ENCODE measurements at regions of chr16 and their contacts with region 1.

Region 1: DNA sequence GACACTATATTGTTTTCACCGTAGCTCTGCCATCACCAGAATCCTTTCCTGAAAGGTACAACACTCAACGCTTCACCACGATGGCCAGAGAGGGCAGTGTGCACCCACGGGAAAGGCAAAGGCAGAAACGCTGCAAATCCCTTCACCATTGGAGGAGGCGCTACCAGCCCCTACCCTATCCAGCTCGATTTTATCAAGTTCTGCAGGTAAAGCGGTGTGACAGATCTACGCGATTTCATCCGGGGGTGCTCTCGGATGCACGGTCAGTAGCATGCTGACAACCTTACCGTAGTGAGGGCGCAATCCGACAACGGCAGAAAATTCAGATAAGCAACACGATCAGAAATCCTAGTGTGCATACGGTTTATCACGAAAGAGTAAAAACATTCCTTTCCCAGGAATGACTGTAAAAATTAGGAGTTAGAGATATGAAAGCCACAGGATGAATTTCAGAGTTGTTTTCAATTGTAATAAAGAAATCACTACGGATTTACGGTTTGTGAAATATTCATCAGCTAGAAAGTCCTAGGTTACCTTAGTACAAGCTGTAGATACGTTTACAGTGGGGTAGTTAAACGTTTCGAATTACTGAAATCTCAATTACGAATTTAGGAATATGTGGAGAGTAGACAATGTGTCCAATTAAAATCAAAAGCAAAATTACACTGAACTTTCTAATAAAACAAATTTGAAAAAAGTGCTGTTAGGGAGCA is 1.8 kb downstream of the NETO2 start:
- DNase-seq: peak; percentile 87
- ATAC-seq: peak; percentile 55
- H3K4me3 ChIP-seq: peak overlapping the region; percentile 42 to 81 (median 64)
- H3K4me3 Mint-ChIP-seq: peak overlapping the region; percentile 94
- H3K27ac ChIP-seq: no peak overlapping the region
- H3K27ac Mint-ChIP-seq: peak overlapping the region; percentile 54
- H3K4me1 ChIP-seq: peaks cover 9 to 16% of the 10 kb centered on the region in 2 donors
- H3K4me1 Mint-ChIP-seq: peaks cover 19% of the 10 kb centered on the region
- H3K27me3 ChIP-seq: peaks cover 0 to 9% (median 0%) of the 10 kb centered on the region in 4 experiments
- H3K27me3 Mint-ChIP-seq: no peaks in the 10 kb centered on the region
- CTCF ChIP-seq: peak; percentile 96

Region 2: GRCh38 chr16:46947900-46948547 is 193.9 kb before region 1 on chr16:
- CTCF ChIA-PET with region 1: interaction called, 10 read pairs
- POLR2A ChIA-PET with region 1: no interaction called
- intact Hi-C with region 1: loop called (anchors 1 kb)
- DNase-seq: peak; percentile 68
- ATAC-seq: peak; percentile 63
- H3K4me3 ChIP-seq: no peak overlapping the region
- H3K4me3 Mint-ChIP-seq: no peak overlapping the region
- H3K27ac ChIP-seq: no peak overlapping the region
- H3K27ac Mint-ChIP-seq: no peak overlapping the region
- H3K4me1 ChIP-seq: peaks cover 0 to 3% of the 10 kb centered on the region in 2 donors
- H3K4me1 Mint-ChIP-seq: peaks cover 6% of the 10 kb centered on the region
- H3K27me3 ChIP-seq: no peaks in the 10 kb centered on the region
- H3K27me3 Mint-ChIP-seq: no peaks in the 10 kb centered on the region
- CTCF ChIP-seq: peak; percentile 75

Region 3: GRCh38 chr16:47037746-47038458 is 104.0 kb before region 1 on chr16:
- CTCF ChIA-PET with region 1: interaction called, 50 read pairs
- POLR2A ChIA-PET with region 1: no interaction called
- intact Hi-C with region 1: loop called (anchors 1 kb)
- DNase-seq: peak; percentile 90
- ATAC-seq: peak; percentile 98
- H3K4me3 ChIP-seq: peak overlapping the region; percentile 53 to 90 (median 63)
- H3K4me3 Mint-ChIP-seq: peak overlapping the region; percentile 90
- H3K27ac ChIP-seq: peak overlapping the region in 1 of 2 donors; percentile 52
- H3K27ac Mint-ChIP-seq: peak overlapping the region; percentile 68
- H3K4me1 ChIP-seq: peaks cover 3 to 26% of the 10 kb centered on the region in 2 donors
- H3K4me1 Mint-ChIP-seq: peaks cover 25% of the 10 kb centered on the region
- H3K27me3 ChIP-seq: no peaks in the 10 kb centered on the region
- H3K27me3 Mint-ChIP-seq: no peaks in the 10 kb centered on the region
- CTCF ChIP-seq: peak; percentile 95

Region 4: DNA sequence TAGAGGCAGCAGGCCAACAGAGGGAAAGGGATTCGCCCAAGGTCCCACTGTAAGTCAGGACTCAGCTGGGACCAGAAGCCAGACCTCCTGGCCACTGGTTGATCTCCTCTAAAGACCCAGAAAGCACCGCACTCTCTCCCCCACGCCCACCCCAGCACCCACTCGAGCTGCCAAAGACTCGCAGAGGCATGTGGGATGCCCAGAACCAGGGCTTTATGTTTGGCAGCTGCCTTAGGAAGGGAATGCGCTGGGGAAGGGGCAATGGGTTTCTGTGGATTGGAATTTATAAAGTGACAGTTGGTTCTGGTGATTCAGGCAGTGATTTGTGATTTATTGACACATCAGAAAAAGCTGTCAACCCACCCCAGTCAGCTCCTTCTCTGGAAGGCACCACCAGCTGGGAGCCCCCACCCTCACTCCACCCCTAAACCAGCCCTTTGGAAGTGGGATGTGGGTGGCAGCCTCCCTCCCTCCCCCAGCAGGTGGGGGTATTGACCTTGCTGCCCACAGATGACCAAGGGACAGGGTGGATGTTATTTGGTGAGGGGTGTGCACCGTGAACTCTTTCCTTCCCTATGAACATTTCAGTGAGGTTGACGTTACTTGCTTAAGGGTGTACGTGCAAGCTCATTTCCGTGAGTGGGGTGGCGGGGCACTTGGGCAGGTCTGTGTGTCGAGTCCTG is 91.9 kb before region 1 on chr16:
- CTCF ChIA-PET with region 1: no interaction called
- POLR2A ChIA-PET with region 1: no interaction called
- intact Hi-C with region 1: no loop called
- DNase-seq: no peak
- ATAC-seq: no peak
- H3K4me3 ChIP-seq: no peak overlapping the region
- H3K4me3 Mint-ChIP-seq: no peak overlapping the region
- H3K27ac ChIP-seq: no peak overlapping the region
- H3K27ac Mint-ChIP-seq: no peak overlapping the region
- H3K4me1 ChIP-seq: peaks cover 9 to 27% of the 10 kb centered on the region in 2 donors
- H3K4me1 Mint-ChIP-seq: peaks cover 24% of the 10 kb centered on the region
- H3K27me3 ChIP-seq: no peaks in the 10 kb centered on the region
- H3K27me3 Mint-ChIP-seq: no peaks in the 10 kb centered on the region
- CTCF ChIP-seq: no peak

Region 5: GRCh38 chr16:47460711-47461597 is 319.0 kb after region 1 on chr16 and contains the starts of genes ITFG1 and PHKB:
- CTCF ChIA-PET with region 1: interaction called, 5 read pairs
- POLR2A ChIA-PET with region 1: no interaction called
- intact Hi-C with region 1: loop called (anchors 1 kb)
- DNase-seq: peak; percentile 97
- ATAC-seq: peak; percentile 89
- H3K4me3 ChIP-seq: peak within 1 kb of the TSS; percentile 73 to 93 (median 88)
- H3K4me3 Mint-ChIP-seq: peak within 1 kb of the TSS; percentile 98
- H3K27ac ChIP-seq: peak within 1 kb of the TSS; percentile 94 to 97
- H3K27ac Mint-ChIP-seq: peak within 1 kb of the TSS; percentile 97
- H3K4me1 ChIP-seq: peaks cover 40 to 53% of the 10 kb centered on the region in 2 donors
- H3K4me1 Mint-ChIP-seq: peaks cover 68% of the 10 kb centered on the region
- H3K27me3 ChIP-seq: no peaks in the 10 kb centered on the region
- H3K27me3 Mint-ChIP-seq: no peaks in the 10 kb centered on the region
- CTCF ChIP-seq: no peak
- total RNA-seq, gene ITFG1: 40.4 and 47.5 TPM in 2 replicates
- total RNA-seq, gene PHKB: 223 and 228 TPM in 2 replicates

Region 6: DNA sequence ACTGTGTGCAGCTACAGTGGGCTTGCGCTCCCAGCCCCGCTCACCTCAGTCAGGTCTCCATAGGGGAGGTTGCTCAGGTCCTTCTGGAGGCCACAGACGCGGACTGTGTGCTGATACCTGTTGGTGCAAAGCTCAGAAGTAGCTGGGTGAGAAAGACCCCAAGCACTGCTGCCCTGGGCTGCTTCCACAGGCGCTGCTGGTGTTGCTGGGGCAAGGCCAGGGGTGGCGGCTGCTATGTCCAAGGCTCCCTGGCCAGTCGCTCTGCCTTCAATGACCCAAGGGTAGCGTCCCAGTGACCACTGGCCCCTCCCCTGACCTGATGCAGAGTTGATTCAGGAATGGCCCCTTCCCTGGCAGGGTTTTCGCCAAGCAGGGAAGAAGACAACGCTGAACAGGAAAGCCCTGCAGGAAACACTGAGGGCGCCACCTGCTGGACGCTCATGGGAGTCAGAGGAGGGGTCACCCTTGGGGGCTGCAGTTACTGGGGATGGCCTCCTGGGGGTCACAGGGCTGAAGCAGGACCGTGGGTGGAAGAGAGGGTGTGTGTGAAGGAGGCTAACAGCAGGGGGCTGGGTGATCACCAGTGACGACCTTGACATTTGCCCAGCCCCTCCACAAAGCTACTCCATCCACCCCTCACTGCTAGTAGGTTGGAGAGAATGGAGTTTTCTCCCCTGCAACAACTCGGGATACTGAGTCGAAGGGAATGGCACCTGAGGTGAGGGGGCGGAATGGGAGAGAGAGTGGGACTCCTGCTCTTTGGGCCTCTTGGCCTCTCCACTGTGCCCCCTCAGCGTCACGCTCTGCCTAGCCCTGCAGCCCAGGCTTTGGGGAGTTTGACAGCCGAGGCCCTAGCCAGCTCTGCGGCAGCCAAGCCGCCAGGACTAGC is 975.5 kb after region 1 on chr16:
- CTCF ChIA-PET with region 1: interaction called, 22 read pairs
- POLR2A ChIA-PET with region 1: no interaction called
- intact Hi-C with region 1: no loop called
- DNase-seq: peak; percentile 63
- ATAC-seq: peak; percentile 67
- H3K4me3 ChIP-seq: no peak overlapping the region
- H3K4me3 Mint-ChIP-seq: no peak overlapping the region
- H3K27ac ChIP-seq: no peak overlapping the region
- H3K27ac Mint-ChIP-seq: no peak overlapping the region
- H3K4me1 ChIP-seq: no peaks in the 10 kb centered on the region
- H3K4me1 Mint-ChIP-seq: no peaks in the 10 kb centered on the region
- H3K27me3 ChIP-seq: no peaks in the 10 kb centered on the region
- H3K27me3 Mint-ChIP-seq: peaks cover 6% of the 10 kb centered on the region
- CTCF ChIP-seq: peak; percentile 74

Region 7: GRCh38 chr16:48244080-48244862 is 1102.3 kb after region 1 on chr16 and contains the start of gene LONP2:
- CTCF ChIA-PET with region 1: no interaction called
- POLR2A ChIA-PET with region 1: no interaction called
- intact Hi-C with region 1: loop called (anchors 5 kb)
- DNase-seq: peak; percentile 91
- ATAC-seq: peak; percentile 96
- H3K4me3 ChIP-seq: peak within 1 kb of the TSS; percentile 60 to 87 (median 78)
- H3K4me3 Mint-ChIP-seq: peak within 1 kb of the TSS; percentile 91
- H3K27ac ChIP-seq: peak within 1 kb of the TSS; percentile 78 to 90
- H3K27ac Mint-ChIP-seq: peak within 1 kb of the TSS; percentile 79
- H3K4me1 ChIP-seq: peaks cover 16 to 22% of the 10 kb centered on the region in 2 donors
- H3K4me1 Mint-ChIP-seq: peaks cover 27% of the 10 kb centered on the region
- H3K27me3 ChIP-seq: no peaks in the 10 kb centered on the region
- H3K27me3 Mint-ChIP-seq: no peaks in the 10 kb centered on the region
- CTCF ChIP-seq: no peak
- total RNA-seq, gene LONP2: 84.2 and 87.2 TPM in 2 replicates